Activated CD8-positive, alpha-beta T cell treated with anti-CD3 and anti-CD28 coated beads for 36 hours (primary cell): ENCODE measurements at regions of chr6 and their contacts with region 1.

Region 1: DNA sequence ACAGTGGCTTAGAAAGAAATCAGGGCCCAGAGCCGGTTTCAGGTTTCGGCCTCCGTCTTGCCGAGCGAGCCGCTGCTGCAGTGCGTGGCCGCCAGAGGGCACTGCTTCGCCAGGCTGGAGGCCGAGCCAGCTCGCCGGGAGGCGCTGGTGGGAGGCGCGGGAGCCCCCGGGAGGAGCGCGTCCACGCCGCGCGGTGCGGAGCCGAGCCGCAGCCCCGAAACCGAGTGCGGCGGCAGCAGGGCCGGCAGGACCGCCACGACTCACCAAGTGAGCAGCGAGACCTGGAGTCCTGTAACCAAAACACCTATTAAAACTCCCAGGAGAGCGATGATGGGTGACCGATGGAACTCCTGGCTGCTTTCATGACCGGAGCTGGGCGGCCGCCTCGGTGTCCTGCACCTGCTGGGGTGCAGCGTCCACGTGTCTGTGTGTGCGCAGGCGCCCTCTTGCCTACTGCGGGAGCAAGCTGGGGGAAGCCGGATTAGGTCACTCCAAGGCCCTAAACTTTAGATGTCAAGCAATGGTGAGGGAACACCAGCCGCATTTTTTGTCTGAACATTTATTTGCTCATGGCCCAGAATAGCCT is 186.9 kb upstream of the UST start:
- DNase-seq: peak; percentile 71
- ATAC-seq: peak; percentile 92
- H3K4me3 Mint-ChIP-seq: no peak overlapping the region
- H3K27ac Mint-ChIP-seq: no peak overlapping the region
- H3K4me1 Mint-ChIP-seq: peaks cover 7% of the 10 kb centered on the region
- H3K27me3 Mint-ChIP-seq: peaks cover 23% of the 10 kb centered on the region
- CTCF ChIP-seq: peak; percentile 90

Region 2: DNA sequence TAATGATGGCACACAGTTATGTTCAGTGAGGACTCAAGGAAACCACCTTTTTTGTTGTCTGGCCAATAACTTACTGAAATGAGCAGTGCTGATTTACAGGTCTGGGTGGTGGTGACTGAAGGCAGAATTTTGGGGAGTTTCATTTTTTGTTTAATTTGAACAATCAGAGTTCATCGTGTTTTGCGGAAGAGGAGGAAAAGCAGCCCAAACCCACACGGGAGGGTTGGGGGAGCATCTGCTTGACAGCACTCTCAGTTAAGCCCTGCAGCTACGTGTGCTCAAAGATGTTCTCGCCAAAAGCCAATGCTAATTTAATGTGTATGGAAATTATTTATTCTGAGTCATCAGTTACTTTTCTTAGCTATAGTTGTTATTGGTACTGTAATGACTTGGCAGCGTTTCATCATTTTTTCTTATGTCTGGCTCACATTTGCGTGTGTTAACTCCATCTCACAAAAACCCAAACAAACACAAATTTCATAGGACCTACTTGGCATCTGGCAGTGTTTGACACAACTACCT is 276.0 kb after region 1 on chr6:
- CTCF ChIA-PET with region 1: no interaction called
- POLR2A ChIA-PET with region 1: no interaction called
- intact Hi-C with region 1: loop called (anchors 10 kb)
- DNase-seq: peak; percentile 48
- ATAC-seq: peak; percentile 78
- H3K4me3 Mint-ChIP-seq: peak overlapping the region; percentile 44
- H3K27ac Mint-ChIP-seq: peak overlapping the region; percentile 88
- H3K4me1 Mint-ChIP-seq: peaks cover 18% of the 10 kb centered on the region
- H3K27me3 Mint-ChIP-seq: peaks cover 5% of the 10 kb centered on the region
- CTCF ChIP-seq: no peak

Region 3: GRCh38 chr6:148947621-148948444 is 387.9 kb after region 1 on chr6:
- CTCF ChIA-PET with region 1: interaction called, 13 read pairs
- POLR2A ChIA-PET with region 1: no interaction called
- intact Hi-C with region 1: loop called (anchors 5 kb)
- DNase-seq: peak; percentile 87
- ATAC-seq: peak; percentile 92
- H3K4me3 Mint-ChIP-seq: no peak overlapping the region
- H3K27ac Mint-ChIP-seq: no peak overlapping the region
- H3K4me1 Mint-ChIP-seq: no peaks in the 10 kb centered on the region
- H3K27me3 Mint-ChIP-seq: peaks cover 2% of the 10 kb centered on the region
- CTCF ChIP-seq: peak; percentile 89